ENCODE measurements at regions of chr5 and their contacts with region 1.

Region 1: GRCh38 chr5:119411935-119412602 is 40.2 kb upstream of the HSD17B4 start:
- DNase-seq: no peak
- H3K4me3 ChIP-seq: peak overlapping the region; percentile 62
- CTCF ChIP-seq: peak; percentile 74

Region 2: GRCh38 chr5:118987988-118988865 is 423.8 kb before region 1 on chr5 and contains the start of gene DTWD2:
- CTCF ChIA-PET with region 1: interaction called, 233 read pairs
- POLR2A ChIA-PET with region 1: interaction called, 5 read pairs
- DNase-seq: peak; percentile 24
- H3K4me3 ChIP-seq: peak within 1 kb of the TSS; percentile 74
- CTCF ChIP-seq: peak; percentile 95

Region 3: DNA sequence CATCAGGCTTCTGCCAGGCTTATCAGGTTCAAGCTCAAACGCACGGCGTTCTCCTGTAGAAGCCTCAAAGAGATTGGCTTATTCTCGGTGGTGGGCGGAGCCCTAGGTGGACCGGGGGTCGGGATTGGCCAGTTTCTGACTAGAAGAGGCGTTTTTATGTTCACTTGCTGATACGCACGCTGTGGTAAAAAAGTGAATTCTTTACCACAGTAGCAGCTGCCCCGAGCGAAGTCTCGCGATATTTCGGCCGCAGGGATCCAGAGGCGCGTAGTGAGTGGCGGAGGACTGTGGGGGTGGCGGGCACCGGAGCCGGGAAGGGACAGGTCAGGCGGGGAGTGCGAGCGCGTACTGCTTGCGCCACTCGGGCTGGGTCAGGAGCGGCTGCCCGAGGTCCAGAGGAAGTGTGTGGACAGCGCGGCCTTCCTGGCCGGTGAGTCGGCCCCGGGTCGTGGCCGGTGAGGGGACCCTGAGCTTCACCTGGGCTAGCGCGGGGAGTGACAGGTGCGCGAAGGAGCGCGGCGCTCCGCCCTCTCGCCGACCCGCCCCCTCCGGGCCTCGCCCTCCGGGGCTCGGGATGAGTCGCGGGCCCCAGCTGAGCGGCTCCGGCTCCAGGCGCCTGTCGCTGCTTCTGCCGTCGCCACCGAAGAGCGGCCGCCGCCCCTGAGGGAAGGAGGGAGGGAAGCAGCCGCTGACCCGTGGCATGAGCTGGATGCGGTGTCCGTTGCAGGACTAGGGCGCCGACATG is 341.1 kb before region 1 on chr5 and contains the start of gene DMXL1:
- CTCF ChIA-PET with region 1: interaction called, 13 read pairs
- POLR2A ChIA-PET with region 1: no interaction called
- DNase-seq: peak; percentile 96
- H3K4me3 ChIP-seq: peak within 1 kb of the TSS; percentile 99
- CTCF ChIP-seq: no peak

Region 4: DNA sequence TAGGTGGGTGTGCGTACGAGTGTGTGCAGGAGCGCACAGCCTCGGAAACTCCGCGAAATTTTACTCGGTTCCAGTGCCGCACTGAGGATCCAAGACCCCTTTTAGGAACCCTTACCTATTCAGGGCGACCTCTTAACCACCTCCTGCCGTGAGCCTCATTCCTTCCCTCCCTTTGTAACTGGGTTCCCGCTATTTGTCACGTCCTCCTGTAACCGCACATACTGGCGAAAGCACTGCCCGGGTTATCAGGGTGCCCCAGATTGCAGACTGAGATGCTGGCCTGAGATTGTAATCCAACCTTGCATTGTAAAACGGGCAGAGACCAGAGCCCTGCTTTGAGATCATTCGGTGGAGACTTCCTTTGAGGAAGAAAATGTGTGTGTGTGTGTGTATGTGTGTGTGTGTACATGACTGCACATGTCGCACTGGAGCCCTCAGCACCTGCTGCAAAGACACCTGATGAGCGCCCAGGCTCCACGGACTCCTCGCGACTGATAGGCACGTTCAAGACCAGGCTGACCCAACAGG is 142.9 kb before region 1 on chr5:
- CTCF ChIA-PET with region 1: interaction called, 16 read pairs
- POLR2A ChIA-PET with region 1: interaction called, 3 read pairs
- DNase-seq: no peak
- H3K4me3 ChIP-seq: peak overlapping the region; percentile 89
- CTCF ChIP-seq: no peak

Region 5: GRCh38 chr5:119332978-119333401 is 79.1 kb before region 1 on chr5:
- CTCF ChIA-PET with region 1: interaction called, 34 read pairs
- POLR2A ChIA-PET with region 1: no interaction called
- DNase-seq: no peak
- H3K4me3 ChIP-seq: no peak overlapping the region
- CTCF ChIP-seq: no peak

Region 6: GRCh38 chr5:119389288-119390030 is 22.6 kb before region 1 on chr5:
- CTCF ChIA-PET with region 1: interaction called, 22 read pairs
- POLR2A ChIA-PET with region 1: no interaction called
- DNase-seq: no peak
- H3K4me3 ChIP-seq: no peak overlapping the region
- CTCF ChIP-seq: no peak

Region 7: DNA sequence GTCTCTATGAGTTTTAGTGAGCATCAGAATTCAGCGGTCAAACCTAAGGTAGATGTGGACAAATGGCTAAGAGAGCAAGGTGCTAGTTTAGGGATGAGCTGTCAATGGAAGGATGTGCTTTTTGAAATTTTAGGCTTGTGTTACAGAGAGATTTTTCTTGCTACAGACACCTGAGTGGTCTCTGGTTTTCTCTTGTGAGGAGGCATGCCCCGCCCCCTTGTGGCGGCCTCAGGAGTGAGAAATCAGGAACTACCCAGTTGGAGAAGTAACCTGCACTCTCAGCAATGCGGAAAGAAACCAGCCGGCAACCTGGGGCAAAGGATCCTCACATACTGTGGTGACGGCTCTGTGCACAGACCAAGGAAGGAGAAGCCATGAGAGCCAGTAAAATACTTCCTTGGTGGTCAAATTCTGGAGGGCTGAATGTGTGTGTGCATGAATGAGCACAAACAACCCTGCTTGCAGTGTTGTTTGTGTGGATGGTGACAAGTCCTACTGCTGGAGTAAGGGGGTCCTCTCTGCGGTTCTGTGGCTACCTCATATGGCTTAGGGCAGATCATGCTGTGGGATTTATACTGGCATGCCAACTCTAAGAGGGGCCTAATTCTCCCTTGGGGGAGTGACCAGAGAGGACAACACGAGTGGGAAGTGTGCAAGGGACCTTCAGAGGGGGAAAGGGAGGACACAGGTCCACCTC is 23.5 kb after region 1 on chr5:
- CTCF ChIA-PET with region 1: interaction called, 23 read pairs
- POLR2A ChIA-PET with region 1: no interaction called
- DNase-seq: no peak
- H3K4me3 ChIP-seq: no peak overlapping the region
- CTCF ChIP-seq: peak; percentile 73

Measured in AG04449 (cell line).